ENCODE measurements at regions of chr11 and their contacts with region 1.

Region 1: DNA sequence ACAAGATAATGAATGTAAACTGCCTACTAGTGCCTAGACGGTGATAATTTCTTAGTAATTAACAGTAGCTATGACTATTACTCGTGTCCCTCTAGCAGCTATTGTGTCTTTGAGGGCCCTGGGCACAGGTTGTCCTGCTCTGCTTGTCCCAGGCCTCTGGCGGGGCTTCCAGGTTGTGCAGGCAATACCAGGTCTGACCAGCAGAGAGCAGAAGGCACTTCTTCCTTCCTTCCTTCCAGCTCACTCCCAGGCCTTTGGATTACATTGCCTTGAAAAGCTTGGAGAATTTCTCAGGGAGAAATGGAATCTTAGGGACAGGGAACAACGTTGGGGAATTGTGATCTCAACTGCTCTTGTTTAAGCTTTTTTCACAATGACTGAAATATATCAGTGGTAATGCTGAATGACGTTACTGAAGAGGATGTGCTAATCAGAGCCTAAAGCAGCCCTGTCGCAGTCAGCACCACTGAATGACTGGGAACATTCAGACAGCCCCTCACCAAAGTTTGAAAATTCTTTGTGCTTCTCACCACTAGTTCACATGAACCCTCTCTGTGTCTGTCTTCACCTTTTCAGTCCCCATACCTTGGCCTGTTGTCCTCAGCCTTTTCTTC is 8.4 kb upstream of the CCKBR start:
- DNase-seq: peak; percentile 80

Region 2: GRCh38 chr11:6175440-6175839 is 75.8 kb before region 1 on chr11:
- CTCF ChIA-PET with region 1: no interaction called
- POLR2A ChIA-PET with region 1: no interaction called
- DNase-seq: no peak

Region 3: DNA sequence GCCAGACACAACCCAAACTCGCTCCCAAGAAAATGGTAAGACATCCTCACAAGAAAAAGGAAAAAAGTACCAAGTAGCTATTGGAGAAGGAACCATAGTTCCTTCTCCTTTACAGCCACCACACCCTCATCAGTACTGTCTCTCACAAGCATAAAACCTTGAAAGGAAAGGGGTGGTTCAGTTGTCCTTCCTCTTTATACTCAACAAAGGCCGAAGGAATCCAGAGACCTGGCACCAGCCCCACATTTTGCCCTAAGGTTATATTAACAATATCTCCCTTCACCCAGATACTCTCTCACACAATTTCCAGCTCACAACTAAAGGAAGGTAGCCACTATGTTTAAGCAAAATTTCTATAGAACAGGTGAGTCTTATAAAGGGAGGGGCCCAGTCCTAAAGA is 25.3 kb before region 1 on chr11:
- CTCF ChIA-PET with region 1: no interaction called
- POLR2A ChIA-PET with region 1: no interaction called
- DNase-seq: no peak

Region 4: DNA sequence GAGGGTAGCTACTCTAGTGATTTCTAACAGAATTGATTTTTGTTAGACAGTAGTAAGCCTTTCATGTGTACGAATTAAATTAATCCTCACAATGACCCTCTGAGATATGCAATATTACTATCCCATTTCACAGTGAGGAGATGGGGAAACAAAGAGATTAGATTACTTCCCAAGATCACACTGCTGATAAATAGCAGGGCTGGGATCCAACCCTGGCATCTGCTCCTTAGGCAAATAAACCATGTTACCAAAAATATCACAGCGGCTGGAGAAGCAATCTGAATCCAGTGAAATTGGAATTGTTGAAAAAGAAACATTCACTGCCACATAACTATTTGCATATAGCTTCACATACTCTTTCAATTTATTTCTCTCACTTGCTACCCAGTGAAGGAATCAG is 81.9 kb after region 1 on chr11:
- CTCF ChIA-PET with region 1: no interaction called
- POLR2A ChIA-PET with region 1: no interaction called
- DNase-seq: no peak

Region 5: GRCh38 chr11:6353367-6353987 is 102.2 kb after region 1 on chr11:
- CTCF ChIA-PET with region 1: interaction called, 22 read pairs
- POLR2A ChIA-PET with region 1: no interaction called
- DNase-seq: peak; percentile 68

Region 6: GRCh38 chr11:6362873-6363678 is 111.8 kb after region 1 on chr11:
- CTCF ChIA-PET with region 1: interaction called, 10 read pairs
- POLR2A ChIA-PET with region 1: no interaction called
- DNase-seq: peak; percentile 81

Region 7: DNA sequence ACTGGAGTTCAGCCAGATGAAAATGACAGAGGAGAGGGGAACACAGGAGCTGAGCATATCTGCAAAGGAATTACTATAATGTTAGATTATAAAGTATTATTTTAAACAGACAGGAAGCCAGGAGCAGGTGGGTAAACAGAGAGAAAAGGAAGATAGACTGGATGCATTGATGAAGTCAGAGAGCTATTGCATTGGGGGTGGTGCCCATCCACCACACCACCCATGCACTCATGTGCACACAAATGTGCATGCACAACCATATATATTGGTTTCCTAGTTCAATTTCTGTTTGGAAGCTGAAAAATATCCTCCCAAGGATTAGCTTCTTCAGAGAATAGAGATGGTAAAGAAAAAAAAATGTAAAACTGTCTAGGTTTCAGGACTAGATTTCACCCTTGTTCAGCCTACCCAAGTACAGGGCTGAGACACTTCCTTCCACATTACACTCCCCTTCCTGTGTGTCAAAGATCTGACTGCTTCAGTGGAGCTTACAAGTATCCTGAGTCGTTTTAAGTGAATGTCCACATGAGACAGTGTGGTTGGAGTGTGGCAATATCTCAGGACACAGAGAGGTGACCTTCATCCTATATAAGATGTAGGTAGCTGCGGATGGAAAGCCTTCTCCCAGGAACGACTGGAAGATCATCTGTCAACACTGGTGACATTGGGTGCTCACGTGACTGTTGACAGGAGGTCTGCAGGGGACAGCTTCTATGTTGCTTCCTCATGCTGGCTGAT is 126.8 kb after region 1 on chr11:
- CTCF ChIA-PET with region 1: no interaction called
- POLR2A ChIA-PET with region 1: no interaction called
- DNase-seq: no peak